Tibial artery (tissue), 4 donors: ENCODE measurements at regions of chr10 and their contacts with region 1.

Region 1: DNA sequence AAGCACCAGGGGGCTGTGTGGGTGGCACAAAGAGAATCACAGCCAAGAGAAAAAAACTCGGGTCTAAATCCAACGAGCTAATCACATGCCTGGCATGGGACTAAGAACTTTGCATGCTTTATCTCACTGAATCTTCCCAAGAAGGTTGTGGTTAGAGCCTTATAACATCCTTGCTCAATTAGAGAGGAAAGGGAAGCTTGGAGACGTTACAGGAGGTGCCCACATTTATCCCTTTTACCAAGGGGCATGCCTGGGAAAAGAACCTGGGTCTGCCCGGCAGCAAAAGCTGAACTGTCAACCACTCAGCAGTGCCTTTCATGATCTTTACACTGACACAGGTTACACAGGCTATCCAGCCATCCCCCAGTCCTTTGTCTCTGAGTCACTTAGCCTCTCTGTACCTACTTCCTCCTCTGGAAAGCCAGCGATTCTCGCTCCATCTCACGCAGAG is 190.1 kb downstream of the PRPF18 start:
- DNase-seq: no peak
- H3K4me3 ChIP-seq: no peak overlapping the region
- H3K27ac ChIP-seq: no peak overlapping the region
- H3K4me1 ChIP-seq: peaks cover 0 to 15% (median 5%) of the 10 kb centered on the region in 4 donors
- H3K27me3 ChIP-seq: no peaks in the 10 kb centered on the region
- CTCF ChIP-seq: no peak

Region 2: DNA sequence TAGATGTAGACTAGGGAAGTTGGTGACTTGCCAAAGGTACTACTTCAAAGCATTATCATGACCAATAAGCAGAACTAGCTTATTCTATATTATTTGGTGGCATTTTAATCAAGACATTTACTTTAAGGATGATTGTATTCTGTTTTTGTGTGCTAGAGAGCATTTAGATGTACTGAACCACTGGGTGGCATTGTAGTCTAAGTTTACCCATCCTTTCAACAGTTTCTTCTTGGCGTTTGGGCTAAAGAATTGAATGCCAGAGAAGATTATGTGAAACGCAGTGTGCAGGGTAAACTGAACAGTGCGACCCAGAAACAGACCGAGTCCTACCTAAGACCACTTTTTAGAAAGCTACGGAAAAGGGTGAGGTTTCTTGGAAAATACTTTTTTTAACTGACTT is 163.4 kb before region 1 on chr10:
- intact Hi-C with region 1: loop called (anchors 5 kb)
- DNase-seq: no peak
- H3K4me3 ChIP-seq: no peak overlapping the region
- H3K27ac ChIP-seq: no peak overlapping the region
- H3K4me1 ChIP-seq: peaks cover 0 to 14% (median 6%) of the 10 kb centered on the region in 4 donors
- H3K27me3 ChIP-seq: no peaks in the 10 kb centered on the region
- CTCF ChIP-seq: peak; percentile 21 to 36

Region 3: GRCh38 chr10:13659897-13660550 is 116.9 kb before region 1 on chr10:
- intact Hi-C with region 1: loop called (anchors 2 kb)
- DNase-seq: peak; percentile 55 to 80
- H3K4me3 ChIP-seq: no peak overlapping the region
- H3K27ac ChIP-seq: peak overlapping the region in 1 of 2 donors; percentile 45
- H3K4me1 ChIP-seq: peaks cover 0 to 12% (median 0%) of the 10 kb centered on the region in 4 donors
- H3K27me3 ChIP-seq: no peaks in the 10 kb centered on the region
- CTCF ChIP-seq: peak; percentile 89 to 92

Region 4: GRCh38 chr10:13839430-13839990 is 62.6 kb after region 1 on chr10:
- intact Hi-C with region 1: no loop called
- DNase-seq: peak; percentile 40 to 85
- H3K4me3 ChIP-seq: no peak overlapping the region
- H3K27ac ChIP-seq: peak overlapping the region; percentile 70 to 81
- H3K4me1 ChIP-seq: peaks cover 0 to 88% (median 51%) of the 10 kb centered on the region in 4 donors
- H3K27me3 ChIP-seq: no peaks in the 10 kb centered on the region
- CTCF ChIP-seq: no peak